Endothelial cell of umbilical vein (primary cell): ENCODE measurements at regions of chr9 and their contacts with region 1.

Region 1: GRCh38 chr9:96327694-96328352 is 25.8 kb upstream of the HSD17B3 start:
- DNase-seq: peak; percentile 74
- H3K4me3 ChIP-seq: no peak overlapping the region
- H3K27ac ChIP-seq: no peak overlapping the region
- H3K4me1 ChIP-seq: peaks cover 7% of the 10 kb centered on the region
- H3K27me3 ChIP-seq: no peaks in the 10 kb centered on the region
- CTCF ChIP-seq: peak; percentile 63 to 69
- POLR2A ChIP-seq: no peak

Region 2: DNA sequence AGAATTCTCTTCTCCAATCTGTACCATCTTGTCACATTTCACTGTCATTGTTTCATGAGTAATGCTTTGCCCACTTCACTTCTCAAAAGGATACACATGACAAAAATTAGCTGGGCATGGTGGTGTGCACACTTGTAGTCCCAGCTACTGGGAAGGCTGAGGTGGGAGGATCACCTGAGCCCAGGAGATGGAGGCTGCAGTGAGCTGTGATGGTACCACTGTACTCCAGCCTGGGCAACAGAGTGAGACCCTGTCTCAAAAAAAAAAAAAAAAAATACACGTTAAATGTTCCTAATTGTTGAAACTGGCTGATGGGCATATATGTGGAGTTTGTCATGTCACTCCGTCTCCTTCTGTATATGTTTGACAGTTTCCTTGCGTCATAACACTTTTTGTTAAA is 10.5 kb after region 1 on chr9:
- CTCF ChIA-PET with region 1: interaction called, 43 read pairs
- POLR2A ChIA-PET with region 1: no interaction called
- dilution Hi-C with region 1: no loop called
- intact Hi-C with region 1: no loop called
- DNase-seq: no peak
- H3K4me3 ChIP-seq: no peak overlapping the region
- H3K27ac ChIP-seq: no peak overlapping the region
- H3K4me1 ChIP-seq: peaks cover 16% of the 10 kb centered on the region
- H3K27me3 ChIP-seq: no peaks in the 10 kb centered on the region
- CTCF ChIP-seq: no peak
- POLR2A ChIP-seq: no peak

Region 3: GRCh38 chr9:96383165-96383942 is 55.5 kb after region 1 on chr9 and contains the start of gene SLC35D2:
- CTCF ChIA-PET with region 1: interaction called, 9 read pairs
- POLR2A ChIA-PET with region 1: no interaction called
- dilution Hi-C with region 1: no loop called
- intact Hi-C with region 1: loop called (anchors 2 kb)
- DNase-seq: peak; percentile 57
- H3K4me3 ChIP-seq: peak within 1 kb of the TSS; percentile 68 to 83 (median 69)
- H3K27ac ChIP-seq: peak within 1 kb of the TSS; percentile 66
- H3K4me1 ChIP-seq: peaks cover 18% of the 10 kb centered on the region
- H3K27me3 ChIP-seq: no peaks in the 10 kb centered on the region
- CTCF ChIP-seq: no peak
- POLR2A ChIP-seq: peak; percentile 68
- total RNA-seq, gene SLC35D2: 28.4 and 29.9 TPM in 2 replicates

Region 4: DNA sequence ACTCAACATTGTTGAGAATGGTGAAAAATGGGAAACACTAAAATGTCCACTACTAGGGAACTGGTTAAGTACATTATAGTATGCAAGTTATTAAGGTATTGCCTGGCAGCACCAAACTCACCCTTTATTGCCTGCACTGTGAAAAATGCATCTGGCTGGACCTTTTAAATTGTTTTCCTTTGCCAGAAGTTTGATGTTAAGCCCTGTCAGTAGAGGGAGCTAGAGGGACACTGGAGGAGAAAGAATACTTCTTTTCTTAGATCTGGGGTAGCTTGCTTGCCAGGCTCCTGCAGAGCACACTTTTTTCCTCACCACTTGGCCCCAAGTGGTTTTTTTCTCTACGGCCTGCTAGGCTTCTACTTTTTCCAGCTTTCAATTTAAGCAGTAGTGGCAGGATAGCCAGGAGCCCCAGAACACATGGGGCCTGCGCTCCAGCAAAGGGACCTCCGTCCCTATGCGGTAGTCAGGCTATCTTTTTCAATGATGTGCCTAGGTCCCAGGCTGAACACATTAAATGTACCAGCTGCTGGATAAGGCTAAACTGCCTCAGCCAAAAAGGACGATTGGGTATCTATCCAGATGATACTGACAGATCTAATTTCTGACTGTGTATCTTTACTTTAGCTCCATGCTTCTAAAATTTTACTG is 114.1 kb after region 1 on chr9:
- CTCF ChIA-PET with region 1: interaction called, 12 read pairs
- POLR2A ChIA-PET with region 1: no interaction called
- dilution Hi-C with region 1: no loop called
- intact Hi-C with region 1: no loop called
- DNase-seq: no peak
- H3K4me3 ChIP-seq: no peak overlapping the region
- H3K27ac ChIP-seq: no peak overlapping the region
- H3K4me1 ChIP-seq: no peaks in the 10 kb centered on the region
- H3K27me3 ChIP-seq: no peaks in the 10 kb centered on the region
- CTCF ChIP-seq: peak; percentile 25 to 28
- POLR2A ChIP-seq: no peak

Region 5: DNA sequence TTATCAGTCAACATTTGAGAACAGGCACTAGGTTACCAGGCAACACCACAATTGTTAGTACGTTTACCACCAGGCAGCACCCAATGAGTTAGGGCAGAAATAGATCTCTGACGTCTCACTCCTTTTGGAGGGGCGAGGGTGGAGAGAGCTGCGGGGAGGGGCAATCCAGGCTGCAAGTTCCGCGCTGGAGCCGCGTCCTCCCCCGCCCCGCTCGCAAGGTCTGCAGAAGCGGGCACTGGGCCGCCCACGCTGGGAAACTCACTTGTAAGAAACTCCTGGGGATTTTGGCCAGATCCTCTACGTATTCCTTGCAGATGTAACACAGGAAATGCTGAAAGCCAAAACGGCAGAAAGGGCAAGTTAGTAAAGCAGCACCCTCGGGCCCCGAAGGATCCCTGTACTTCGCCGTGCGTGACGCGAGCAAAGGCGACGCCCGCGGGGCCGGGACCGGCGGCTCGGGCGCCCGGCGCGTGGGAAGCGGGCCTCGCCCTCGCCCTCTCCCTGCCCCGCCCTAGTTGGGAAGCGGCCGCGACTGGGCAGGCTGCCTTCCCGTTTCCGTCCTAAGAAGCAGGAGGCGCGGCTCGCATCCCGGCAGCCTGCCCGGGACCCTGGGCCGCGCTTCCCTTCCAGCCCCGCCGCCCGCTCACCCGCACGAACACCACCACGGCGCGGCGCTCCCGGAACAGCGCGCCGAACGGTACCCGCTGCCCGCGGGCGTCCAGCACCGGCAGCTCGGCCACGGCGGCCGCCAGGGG is 326.8 kb after region 1 on chr9:
- CTCF ChIA-PET with region 1: interaction called, 8 read pairs
- POLR2A ChIA-PET with region 1: no interaction called
- dilution Hi-C with region 1: no loop called
- intact Hi-C with region 1: loop called (anchors 1 kb)
- DNase-seq: peak; percentile 89
- H3K4me3 ChIP-seq: peak overlapping the region; percentile 39 to 51 (median 50)
- H3K27ac ChIP-seq: peak overlapping the region; percentile 64
- H3K4me1 ChIP-seq: peaks cover 6% of the 10 kb centered on the region
- H3K27me3 ChIP-seq: no peaks in the 10 kb centered on the region
- CTCF ChIP-seq: no peak
- POLR2A ChIP-seq: no peak

Region 6: GRCh38 chr9:96667361-96667728 is 339.5 kb after region 1 on chr9:
- CTCF ChIA-PET with region 1: interaction called, 84 read pairs
- POLR2A ChIA-PET with region 1: no interaction called
- dilution Hi-C with region 1: no loop called
- intact Hi-C with region 1: loop called (anchors 1 kb)
- DNase-seq: no peak
- H3K4me3 ChIP-seq: no peak overlapping the region
- H3K27ac ChIP-seq: no peak overlapping the region
- H3K4me1 ChIP-seq: no peaks in the 10 kb centered on the region
- H3K27me3 ChIP-seq: no peaks in the 10 kb centered on the region
- CTCF ChIP-seq: no peak
- POLR2A ChIP-seq: no peak